ENCODE measurements at regions of chr1 and their contacts with region 1.

Region 1: GRCh38 chr1:82525378-82525777 is 724.6 kb downstream of the ADGRL2 start:
- DNase-seq: no peak
- ATAC-seq: no peak
- H3K4me3 ChIP-seq: no peak overlapping the region
- H3K4me3 Mint-ChIP-seq: no peak overlapping the region
- H3K27ac ChIP-seq: no peak overlapping the region
- H3K27ac Mint-ChIP-seq: no peak overlapping the region
- H3K4me1 ChIP-seq: no peaks in the 10 kb centered on the region
- H3K4me1 Mint-ChIP-seq: no peaks in the 10 kb centered on the region
- H3K27me3 ChIP-seq: no peaks in the 10 kb centered on the region
- H3K27me3 Mint-ChIP-seq: no peaks in the 10 kb centered on the region
- CTCF ChIP-seq: no peak

Region 2: GRCh38 chr1:82542766-82543165 is 17.4 kb after region 1 on chr1:
- CTCF ChIA-PET with region 1: no interaction called
- POLR2A ChIA-PET with region 1: no interaction called
- intact Hi-C with region 1: loop called in 1 of 2 experiments (anchors 1 kb)
- DNase-seq: no peak
- ATAC-seq: no peak
- H3K4me3 ChIP-seq: no peak overlapping the region
- H3K4me3 Mint-ChIP-seq: no peak overlapping the region
- H3K27ac ChIP-seq: no peak overlapping the region
- H3K27ac Mint-ChIP-seq: no peak overlapping the region
- H3K4me1 ChIP-seq: no peaks in the 10 kb centered on the region
- H3K4me1 Mint-ChIP-seq: no peaks in the 10 kb centered on the region
- H3K27me3 ChIP-seq: no peaks in the 10 kb centered on the region
- H3K27me3 Mint-ChIP-seq: no peaks in the 10 kb centered on the region
- CTCF ChIP-seq: no peak